ENCODE measurements at regions of chr11 and their contacts with region 1.

Region 1: GRCh38 chr11:132042296-132042695 is 671.9 kb downstream of the NTM start:
- DNase-seq: no peak
- H3K4me3 ChIP-seq: no peak overlapping the region
- H3K27ac ChIP-seq: no peak overlapping the region
- H3K4me1 ChIP-seq: peaks cover 0 to 5% of the 10 kb centered on the region in 2 experiments; a peak in 1 of 4 replicates
- H3K27me3 ChIP-seq: no peaks in the 10 kb centered on the region
- CTCF ChIP-seq: no peak
- EP300 ChIP-seq: no peak
- RAD21 ChIP-seq: no peak

Region 2: DNA sequence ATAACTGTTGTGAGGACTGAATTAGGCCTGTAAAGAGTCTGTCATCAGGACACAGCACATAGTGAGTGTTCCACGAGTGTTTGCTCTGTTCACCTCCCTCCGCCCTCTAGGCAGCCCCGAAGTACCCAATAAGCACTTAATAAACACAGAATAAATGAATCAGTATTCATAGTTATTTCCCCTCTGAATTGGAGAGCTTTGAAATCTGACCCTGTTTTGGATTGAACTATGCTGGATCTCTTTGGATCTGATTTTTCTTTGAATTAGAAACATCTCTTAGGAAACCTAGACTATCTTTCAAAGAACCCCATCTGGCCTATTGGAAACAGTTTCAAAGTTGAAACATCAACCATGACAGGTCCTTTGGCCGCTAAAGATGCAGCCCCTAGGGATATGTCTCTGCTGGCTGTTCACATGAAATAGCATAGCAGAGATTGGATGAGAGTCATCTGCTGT is 56.4 kb before region 1 on chr11:
- CTCF ChIA-PET with region 1: no interaction called
- POLR2A ChIA-PET with region 1: no interaction called
- DNase-seq: no peak
- H3K4me3 ChIP-seq: no peak overlapping the region
- H3K27ac ChIP-seq: no peak overlapping the region
- H3K4me1 ChIP-seq: no peaks in the 10 kb centered on the region; a peak in 1 of 4 replicates
- H3K27me3 ChIP-seq: no peaks in the 10 kb centered on the region
- CTCF ChIP-seq: no peak
- EP300 ChIP-seq: no peak
- RAD21 ChIP-seq: no peak

Region 3: GRCh38 chr11:132028380-132029240 is 13.7 kb before region 1 on chr11:
- CTCF ChIA-PET with region 1: interaction called, 18 read pairs
- POLR2A ChIA-PET with region 1: no interaction called
- DNase-seq: peak; percentile 46
- H3K4me3 ChIP-seq: no peak overlapping the region
- H3K27ac ChIP-seq: 0 out of 4 replicates have a peak overlapping the region, but pooled peaks of 1 of the 2 experiments have one; percentile 33
- H3K4me1 ChIP-seq: peaks cover 0 to 62% of the 10 kb centered on the region in 2 experiments; a peak in 2 of 4 replicates
- H3K27me3 ChIP-seq: no peaks in the 10 kb centered on the region
- CTCF ChIP-seq: peak; percentile 68
- EP300 ChIP-seq: no peak
- RAD21 ChIP-seq: peak; percentile 80

Measured in SK-N-SH (cell line).